ENCODE measurements at regions of chrX and their contacts with region 1.

Region 1: DNA sequence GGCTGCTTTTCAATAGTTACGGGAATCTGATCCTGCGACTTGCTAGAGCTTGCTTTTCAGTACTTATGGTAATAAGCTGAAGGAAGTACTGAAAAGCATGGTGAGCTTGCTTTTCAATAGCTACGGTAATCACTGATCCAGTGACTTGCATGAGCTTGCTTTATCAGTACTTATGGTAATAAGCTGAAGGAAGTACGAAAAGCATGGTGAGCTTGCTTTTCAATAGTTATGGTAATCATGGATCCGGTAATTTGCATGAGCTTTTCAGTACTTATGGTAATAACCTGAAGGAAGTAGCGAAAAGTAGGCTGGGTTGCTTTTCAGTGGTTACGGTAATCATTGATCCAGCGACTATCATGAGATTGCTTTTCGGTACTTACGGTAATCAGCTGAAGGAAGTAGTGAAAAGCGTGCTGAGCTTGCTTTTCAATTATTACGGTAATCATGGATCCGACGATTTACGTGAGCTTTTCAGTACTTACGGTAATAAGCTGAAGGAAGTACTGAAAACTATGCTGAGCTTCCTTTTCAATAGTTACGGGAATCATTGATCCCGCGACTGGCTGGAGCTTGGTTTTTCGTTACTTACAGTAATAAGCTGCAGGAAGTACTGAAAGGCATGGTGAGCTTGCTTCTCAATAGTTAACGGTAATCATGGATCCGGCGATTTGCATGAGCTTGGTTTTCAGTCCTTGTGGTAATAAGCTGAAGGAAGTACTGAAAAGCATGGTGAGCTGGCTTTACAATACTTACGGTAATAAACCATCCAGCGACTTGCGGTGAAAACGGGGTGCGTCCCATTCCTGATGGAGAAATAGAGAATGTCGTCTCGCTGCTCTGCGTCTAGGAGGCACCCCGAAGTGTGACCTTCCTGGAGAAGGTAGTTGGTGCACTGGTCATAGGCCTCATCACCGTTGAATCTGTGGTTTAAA is 6.5 kb downstream of the CRLF2 start:
- DNase-seq: peak; percentile 65
- H3K4me3 ChIP-seq: no peak overlapping the region
- H3K27ac ChIP-seq: no peak overlapping the region
- H3K4me1 ChIP-seq: no peaks in the 10 kb centered on the region
- H3K27me3 ChIP-seq: no peaks in the 10 kb centered on the region
- CTCF ChIP-seq: no peak
- POLR2A ChIP-seq: no peak

Region 2: DNA sequence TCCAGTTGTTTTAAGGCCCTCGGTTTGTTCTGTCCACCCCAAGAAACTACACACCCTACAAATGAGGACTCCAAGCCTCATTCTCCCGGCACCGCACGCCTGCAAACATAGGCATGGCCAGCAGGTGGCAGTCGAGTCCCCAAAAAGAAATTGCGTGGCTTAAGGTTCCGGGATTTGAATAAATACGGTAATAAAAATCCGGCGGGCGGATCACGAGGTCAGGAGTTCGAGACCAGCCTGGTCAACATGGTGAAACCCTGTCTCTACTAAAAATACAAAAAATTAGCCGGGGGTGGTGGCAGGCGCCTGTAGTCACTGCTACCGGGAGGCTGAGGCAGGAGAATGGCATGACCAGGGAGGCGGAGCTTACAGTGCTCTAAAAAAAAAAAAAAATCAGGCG is 40.9 kb after region 1 on chrX:
- CTCF ChIA-PET with region 1: no interaction called
- POLR2A ChIA-PET with region 1: no interaction called
- dilution Hi-C with region 1: no loop called
- intact Hi-C with region 1: loop called (anchors 1 kb)
- DNase-seq: peak; percentile 63
- H3K4me3 ChIP-seq: no peak overlapping the region
- H3K27ac ChIP-seq: no peak overlapping the region
- H3K4me1 ChIP-seq: no peaks in the 10 kb centered on the region
- H3K27me3 ChIP-seq: peaks cover 2% of the 10 kb centered on the region in 2 experiments
- CTCF ChIP-seq: peak; percentile 72 to 74
- POLR2A ChIP-seq: no peak

Region 3: GRCh38 chrX:1274786-1275185 is 68.8 kb after region 1 on chrX:
- CTCF ChIA-PET with region 1: no interaction called
- POLR2A ChIA-PET with region 1: no interaction called
- dilution Hi-C with region 1: no loop called
- intact Hi-C with region 1: no loop called
- DNase-seq: no peak
- H3K4me3 ChIP-seq: no peak overlapping the region
- H3K27ac ChIP-seq: no peak overlapping the region
- H3K4me1 ChIP-seq: no peaks in the 10 kb centered on the region
- H3K27me3 ChIP-seq: no peaks in the 10 kb centered on the region
- CTCF ChIP-seq: no peak
- POLR2A ChIP-seq: no peak